ENCODE measurements at regions of chr1 and their contacts with region 1.

Region 1: DNA sequence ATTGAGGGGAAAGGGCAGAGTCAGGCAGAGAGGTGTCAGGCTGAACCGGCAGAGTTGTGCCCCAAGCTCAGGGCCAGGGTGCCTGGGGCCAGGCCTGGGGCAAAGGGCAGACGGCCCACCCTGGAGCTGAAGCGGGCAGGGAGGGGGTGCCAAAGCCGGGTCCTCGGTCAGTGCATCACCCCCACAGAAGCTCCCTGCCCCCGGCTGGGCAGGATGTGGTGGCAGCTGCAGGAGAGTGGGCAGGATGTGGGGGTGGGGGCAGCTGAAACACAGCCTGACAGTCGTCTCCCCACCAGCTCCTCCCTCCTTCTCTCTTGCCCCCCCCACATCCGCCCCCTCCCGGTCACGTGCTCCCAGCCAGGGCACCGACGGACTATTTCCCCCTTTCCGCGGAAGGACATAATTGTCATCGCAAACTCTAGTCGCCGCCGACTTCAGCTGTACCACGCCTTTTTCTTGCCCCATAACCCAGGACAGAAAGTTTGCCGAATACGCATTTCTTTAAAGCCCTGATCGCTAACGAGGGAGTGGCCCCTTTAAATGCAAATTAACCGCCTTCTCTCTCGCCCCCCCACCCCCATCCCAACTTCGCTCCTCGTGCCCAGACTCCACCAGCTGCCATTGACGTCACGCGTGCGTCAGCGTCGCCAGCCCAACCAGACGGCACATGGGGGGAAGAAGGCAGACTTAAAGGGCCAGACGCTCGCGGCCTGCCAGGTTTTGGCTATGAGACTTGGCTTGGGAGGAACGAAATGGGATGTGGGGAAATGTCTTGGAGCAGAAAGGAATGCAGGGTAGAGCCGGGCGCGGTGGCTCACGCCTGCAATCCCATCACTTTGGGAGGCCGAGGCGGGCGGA is 4.5 kb upstream of the MEF2D start:
- DNase-seq: peak; percentile 100
- ATAC-seq: peak; percentile 54 to 65

Region 2: GRCh38 chr1:156583821-156584622 is 79.0 kb after region 1 on chr1:
- intact Hi-C with region 1: loop called in 1 of 2 experiments (anchors 5 kb)
- DNase-seq: peak; percentile 66
- ATAC-seq: peak; percentile 50 to 54